MCF 10A (cell line): ENCODE measurements at regions of chrX and their contacts with region 1.

Region 1: DNA sequence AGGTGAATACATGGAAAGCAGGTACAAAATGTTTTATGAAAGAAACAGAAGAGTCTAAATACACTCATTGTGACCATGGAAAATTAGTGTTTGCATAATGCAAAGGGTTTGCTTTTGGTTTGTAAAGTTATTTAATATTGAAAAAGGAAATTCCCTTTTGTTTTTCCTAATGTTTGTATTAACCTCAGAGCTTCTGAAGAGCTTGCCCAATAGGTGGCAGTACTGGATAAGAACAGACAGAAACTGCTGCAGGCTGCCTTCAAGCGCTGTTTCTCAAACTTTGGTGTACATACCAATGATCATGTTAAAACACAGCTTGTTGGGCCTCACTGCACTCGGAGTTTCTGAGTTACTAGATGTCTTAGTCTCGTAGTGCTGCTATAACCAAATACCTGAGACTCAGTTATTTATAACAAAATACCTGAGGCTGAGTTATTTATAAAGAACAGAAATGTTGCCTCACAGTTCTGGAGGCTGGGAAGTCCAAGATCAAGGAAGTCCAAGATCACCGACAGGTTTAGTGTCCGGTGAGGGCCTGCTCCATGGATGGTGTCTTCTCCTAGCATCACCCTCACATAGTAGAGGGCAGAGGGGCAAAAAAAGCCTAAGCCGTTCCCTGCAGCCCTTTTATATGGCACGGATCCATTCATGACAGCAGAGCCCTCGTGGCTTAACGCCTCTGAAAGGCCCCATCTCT is 54.2 kb downstream of the SUPT20HL2 start:
- DNase-seq: peak; percentile 81
- H3K4me3 Mint-ChIP-seq: no peak overlapping the region
- H3K27ac Mint-ChIP-seq: no peak overlapping the region
- H3K4me1 Mint-ChIP-seq: no peaks in the 10 kb centered on the region
- H3K27me3 Mint-ChIP-seq: peaks cover 78% of the 10 kb centered on the region
- CTCF ChIP-seq: peak; percentile 69

Region 2: GRCh38 chrX:24248042-24248441 is 11.7 kb before region 1 on chrX:
- CTCF ChIA-PET with region 1: interaction called, 32 read pairs
- POLR2A ChIA-PET with region 1: no interaction called
- intact Hi-C with region 1: no loop called
- DNase-seq: no peak
- H3K4me3 Mint-ChIP-seq: no peak overlapping the region
- H3K27ac Mint-ChIP-seq: no peak overlapping the region
- H3K4me1 Mint-ChIP-seq: peaks cover 20% of the 10 kb centered on the region
- H3K27me3 Mint-ChIP-seq: peaks cover 38% of the 10 kb centered on the region
- CTCF ChIP-seq: no peak

Region 3: GRCh38 chrX:24371391-24371972 is 111.8 kb after region 1 on chrX:
- CTCF ChIA-PET with region 1: interaction called, 6 read pairs
- POLR2A ChIA-PET with region 1: no interaction called
- intact Hi-C with region 1: loop called (anchors 1 kb)
- DNase-seq: peak; percentile 74
- H3K4me3 Mint-ChIP-seq: no peak overlapping the region
- H3K27ac Mint-ChIP-seq: no peak overlapping the region
- H3K4me1 Mint-ChIP-seq: no peaks in the 10 kb centered on the region
- H3K27me3 Mint-ChIP-seq: peaks cover 29% of the 10 kb centered on the region
- CTCF ChIP-seq: peak; percentile 75

Region 4: DNA sequence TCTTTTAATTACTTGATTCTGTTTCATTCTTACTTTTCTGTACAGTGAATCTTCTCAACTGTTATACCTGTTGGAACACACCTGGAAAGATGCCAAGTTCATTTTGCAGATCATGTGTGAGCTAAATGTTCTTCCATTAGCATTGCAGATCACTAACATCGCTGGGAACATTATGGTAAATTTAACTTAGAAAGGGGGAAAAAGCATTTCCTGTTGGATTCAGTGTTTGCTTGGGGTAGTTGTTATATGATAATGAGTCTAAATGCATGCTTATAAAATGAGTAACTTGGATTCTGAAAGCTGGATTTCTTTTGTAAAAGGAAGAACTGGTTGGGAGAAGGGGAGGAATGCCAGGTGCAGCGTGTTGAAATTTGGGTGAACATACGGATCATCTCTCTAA is 481.6 kb after region 1 on chrX:
- CTCF ChIA-PET with region 1: no interaction called
- POLR2A ChIA-PET with region 1: no interaction called
- intact Hi-C with region 1: loop called (anchors 10 kb)
- DNase-seq: no peak
- H3K4me3 Mint-ChIP-seq: no peak overlapping the region
- H3K27ac Mint-ChIP-seq: no peak overlapping the region
- H3K4me1 Mint-ChIP-seq: no peaks in the 10 kb centered on the region
- H3K27me3 Mint-ChIP-seq: peaks cover 30% of the 10 kb centered on the region
- CTCF ChIP-seq: no peak